ENCODE measurements at regions of chr3 and their contacts with region 1.

Region 1: DNA sequence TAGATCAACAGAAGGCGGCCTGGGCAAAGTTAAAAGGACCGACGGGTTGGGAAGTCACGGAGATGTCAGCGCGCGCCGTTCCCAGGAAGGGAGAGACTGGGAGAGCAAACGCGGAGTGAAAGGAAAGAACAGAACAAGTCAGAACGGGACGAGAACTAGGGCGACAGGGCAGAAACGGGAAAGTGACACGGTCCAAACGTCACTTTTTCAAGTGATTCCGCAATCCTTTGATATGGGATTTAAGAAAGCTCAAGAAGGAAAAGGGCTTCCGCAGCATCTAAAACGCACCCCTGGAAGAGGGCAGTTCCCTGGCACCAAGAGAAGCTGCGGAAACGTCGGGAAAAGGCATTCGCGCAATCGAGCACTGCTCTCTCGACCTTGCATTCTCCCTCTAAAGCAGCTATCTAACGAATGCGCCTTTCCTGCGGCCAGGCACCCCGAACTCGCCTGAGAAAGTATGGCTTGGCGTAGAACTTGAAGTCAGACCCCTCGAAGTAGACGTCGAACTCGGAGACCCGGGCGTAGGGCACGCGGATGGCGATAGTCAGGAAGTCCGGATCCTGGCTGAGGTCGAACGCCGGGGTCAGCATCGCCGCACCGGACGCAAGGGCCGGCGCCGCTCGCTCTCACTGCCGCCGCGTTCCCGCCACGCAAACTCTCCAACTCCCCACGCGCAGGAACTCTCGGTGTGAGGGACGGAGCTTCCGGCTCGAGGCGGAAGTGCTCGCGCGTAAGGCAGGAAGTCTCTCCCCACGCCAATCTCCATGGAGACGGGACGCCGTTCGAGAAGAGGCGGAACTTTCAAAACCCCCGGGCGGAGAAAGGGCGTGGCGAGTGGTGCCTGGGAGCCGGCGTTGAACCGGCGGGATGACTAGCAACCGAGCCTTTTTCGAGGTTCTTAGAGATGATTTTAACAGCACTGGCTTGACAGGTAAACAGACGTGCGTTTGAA is at the start of gene SHQ1:
- DNase-seq: peak; percentile 98
- H3K4me3 Mint-ChIP-seq: peak within 1 kb of the TSS; percentile 93
- H3K27ac Mint-ChIP-seq: peak within 1 kb of the TSS; percentile 47
- H3K4me1 Mint-ChIP-seq: peaks cover 48% of the 10 kb centered on the region
- H3K27me3 Mint-ChIP-seq: no peaks in the 10 kb centered on the region
- total RNA-seq, gene SHQ1: 27.9 to 30.1 TPM

Region 2: GRCh38 chr3:72722930-72723726 is 124.9 kb before region 1 on chr3:
- CTCF ChIA-PET with region 1: no interaction called
- POLR2A ChIA-PET with region 1: no interaction called
- intact Hi-C with region 1: loop called (anchors 2 kb)
- DNase-seq: peak; percentile 20
- H3K4me3 Mint-ChIP-seq: no peak overlapping the region
- H3K27ac Mint-ChIP-seq: peak overlapping the region; percentile 3
- H3K4me1 Mint-ChIP-seq: peaks cover 17% of the 10 kb centered on the region
- H3K27me3 Mint-ChIP-seq: no peaks in the 10 kb centered on the region

Region 3: DNA sequence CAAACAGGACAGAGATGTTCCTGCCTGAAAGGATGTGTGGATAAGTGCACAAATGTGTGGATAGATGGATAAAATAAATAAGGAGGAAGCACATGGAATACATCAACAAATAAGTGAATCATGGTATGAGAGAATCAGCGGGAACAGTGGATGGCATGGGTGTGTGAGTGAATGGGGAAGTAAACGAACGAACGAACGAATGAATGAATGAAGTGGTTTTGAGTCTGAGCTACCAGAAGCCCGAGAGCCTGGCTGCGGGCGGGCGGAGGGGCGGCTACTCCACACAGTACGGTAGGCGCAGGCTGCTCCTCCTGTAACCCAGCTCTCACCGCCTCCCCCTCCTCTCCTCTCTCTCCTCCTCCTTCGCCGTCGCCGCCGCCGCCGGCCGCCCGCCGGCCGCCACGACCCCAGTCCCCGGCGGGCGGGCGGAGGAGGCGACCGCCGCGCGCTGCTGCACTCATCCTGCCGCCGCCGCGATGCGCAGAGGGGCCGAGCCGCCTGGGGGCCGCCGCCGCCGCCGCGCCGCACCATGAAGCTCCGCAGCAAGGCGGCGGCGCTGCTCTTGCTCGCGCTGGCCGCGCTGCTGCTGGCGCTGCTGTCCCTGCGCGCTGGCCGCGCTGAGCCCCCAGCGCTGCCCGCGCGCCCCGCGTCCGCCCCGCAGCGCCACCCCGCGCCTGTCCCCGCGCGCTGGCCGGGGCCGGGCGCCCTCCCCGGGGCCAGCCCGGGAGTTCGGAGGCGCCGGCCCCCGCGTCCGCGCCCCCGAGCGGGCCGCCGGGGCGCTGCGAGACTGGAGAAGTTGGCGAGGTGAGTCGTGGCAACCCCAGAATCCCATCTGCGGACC is 39.9 kb after region 1 on chr3 and contains the start of gene GXYLT2:
- CTCF ChIA-PET with region 1: interaction called, 5 read pairs
- POLR2A ChIA-PET with region 1: no interaction called
- intact Hi-C with region 1: loop called (anchors 5 kb)
- DNase-seq: peak; percentile 44
- H3K4me3 Mint-ChIP-seq: peak within 1 kb of the TSS; percentile 64
- H3K27ac Mint-ChIP-seq: no peak within 1 kb of the TSS
- H3K4me1 Mint-ChIP-seq: peaks cover 17% of the 10 kb centered on the region
- H3K27me3 Mint-ChIP-seq: peaks cover 66% of the 10 kb centered on the region
- total RNA-seq, gene GXYLT2: not detected

Region 4: GRCh38 chr3:72977060-72977808 is 129.2 kb after region 1 on chr3:
- CTCF ChIA-PET with region 1: no interaction called
- POLR2A ChIA-PET with region 1: no interaction called
- intact Hi-C with region 1: loop called (anchors 1 kb)
- DNase-seq: peak; percentile 57
- H3K4me3 Mint-ChIP-seq: peak overlapping the region; percentile 20
- H3K27ac Mint-ChIP-seq: peak overlapping the region; percentile 83
- H3K4me1 Mint-ChIP-seq: peaks cover 28% of the 10 kb centered on the region
- H3K27me3 Mint-ChIP-seq: peaks cover 2% of the 10 kb centered on the region

Region 5: GRCh38 chr3:73056014-73056844 is 208.2 kb after region 1 on chr3:
- CTCF ChIA-PET with region 1: interaction called, 17 read pairs
- POLR2A ChIA-PET with region 1: interaction called, 4 read pairs
- intact Hi-C with region 1: no loop called
- DNase-seq: no peak
- H3K4me3 Mint-ChIP-seq: no peak overlapping the region
- H3K27ac Mint-ChIP-seq: no peak overlapping the region
- H3K4me1 Mint-ChIP-seq: peaks cover 26% of the 10 kb centered on the region
- H3K27me3 Mint-ChIP-seq: no peaks in the 10 kb centered on the region

Measured in activated CD4-positive, alpha-beta memory T cell treated with anti-CD3 and anti-CD28 coated beads for 36 hours (primary cell).